Endothelial cell of umbilical vein (primary cell): ENCODE measurements at regions of chr6 and their contacts with region 1.

Region 1: DNA sequence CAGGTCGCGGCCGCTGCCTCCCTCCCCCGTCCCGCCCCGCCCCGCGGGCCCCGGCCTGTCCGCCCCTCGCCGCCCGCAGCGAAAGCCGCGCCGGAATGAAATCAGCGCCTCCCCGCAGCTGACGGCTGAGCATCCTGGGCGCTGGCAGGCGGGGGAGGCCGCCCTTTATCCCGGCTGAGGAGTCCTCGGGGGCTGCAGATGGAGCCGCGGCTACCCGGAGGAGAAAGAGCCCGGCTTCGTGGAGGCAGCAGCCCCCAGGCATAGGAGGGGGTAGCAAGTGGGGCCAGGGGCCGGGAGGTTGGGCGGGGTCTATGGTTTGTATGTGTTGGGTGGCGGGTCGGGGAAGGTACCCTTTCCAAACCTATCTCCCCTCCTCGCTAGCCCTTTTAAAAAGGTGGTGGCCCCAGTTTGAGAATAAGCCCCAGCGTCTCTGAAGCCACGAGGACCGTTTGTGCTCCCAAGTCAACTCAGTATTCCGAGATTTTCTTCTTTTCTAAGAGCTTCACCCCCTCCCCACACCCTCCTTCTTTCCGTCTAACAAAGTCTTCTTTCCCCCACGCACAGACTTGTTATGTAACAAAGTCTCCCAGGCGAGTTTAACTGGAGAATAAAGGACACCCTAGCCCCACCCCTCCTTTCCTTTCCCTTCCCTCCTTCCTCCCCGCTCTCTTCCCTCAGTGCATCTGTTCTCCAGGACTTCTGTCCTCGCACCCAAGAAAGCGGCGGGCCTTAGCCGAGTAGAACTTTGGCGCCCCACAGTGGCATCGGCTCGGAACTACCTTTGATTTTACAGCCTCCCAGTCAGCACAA is 11.0 kb downstream of the POU3F2 start:
- DNase-seq: peak; percentile 80
- H3K4me3 ChIP-seq: no peak overlapping the region
- H3K27ac ChIP-seq: no peak overlapping the region
- H3K4me1 ChIP-seq: peaks cover 2% of the 10 kb centered on the region
- H3K27me3 ChIP-seq: peaks cover 85 to 98% of the 10 kb centered on the region in 2 experiments
- CTCF ChIP-seq: peak; percentile 81 to 87
- POLR2A ChIP-seq: no peak

Region 2: GRCh38 chr6:97186416-97186999 is 1658.9 kb before region 1 on chr6:
- CTCF ChIA-PET with region 1: no interaction called
- POLR2A ChIA-PET with region 1: no interaction called
- dilution Hi-C with region 1: no loop called
- intact Hi-C with region 1: loop called (anchors 2 kb)
- DNase-seq: peak; percentile 77
- H3K4me3 ChIP-seq: no peak overlapping the region
- H3K27ac ChIP-seq: no peak overlapping the region
- H3K4me1 ChIP-seq: peaks cover 32% of the 10 kb centered on the region
- H3K27me3 ChIP-seq: no peaks in the 10 kb centered on the region
- CTCF ChIP-seq: peak; percentile 77 to 85
- POLR2A ChIP-seq: no peak

Region 3: GRCh38 chr6:97437087-97437486 is 1408.3 kb before region 1 on chr6:
- CTCF ChIA-PET with region 1: interaction called, 12 read pairs
- POLR2A ChIA-PET with region 1: no interaction called
- dilution Hi-C with region 1: no loop called
- intact Hi-C with region 1: loop called (anchors 1 kb)
- DNase-seq: peak; percentile 34
- H3K4me3 ChIP-seq: no peak overlapping the region
- H3K27ac ChIP-seq: no peak overlapping the region
- H3K4me1 ChIP-seq: no peaks in the 10 kb centered on the region
- H3K27me3 ChIP-seq: peaks cover 4 to 16% of the 10 kb centered on the region in 2 experiments
- CTCF ChIP-seq: peak; percentile 64 to 69
- POLR2A ChIP-seq: no peak

Region 4: DNA sequence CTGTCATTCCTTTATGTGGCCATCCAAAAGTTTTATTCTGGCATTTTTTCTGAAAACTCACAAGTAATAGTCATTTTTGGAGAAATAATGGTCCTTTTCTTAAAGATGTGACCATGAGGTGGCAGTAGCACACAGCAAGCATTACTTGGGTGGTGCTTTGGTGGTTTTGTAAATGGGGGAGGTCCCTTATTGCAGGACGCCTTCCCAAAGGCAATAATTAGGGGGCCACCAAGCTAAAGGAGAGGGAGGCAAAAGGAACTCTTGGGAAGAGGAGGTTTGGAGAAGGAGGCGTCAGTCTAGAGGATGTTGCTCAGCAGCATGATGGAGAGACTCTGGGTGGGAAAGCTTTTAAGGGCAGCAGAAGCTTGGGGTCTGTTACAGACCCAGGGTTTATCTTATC is 1139.8 kb before region 1 on chr6:
- CTCF ChIA-PET with region 1: no interaction called
- POLR2A ChIA-PET with region 1: no interaction called
- dilution Hi-C with region 1: no loop called
- intact Hi-C with region 1: loop called (anchors 10 kb)
- DNase-seq: no peak
- H3K4me3 ChIP-seq: no peak overlapping the region
- H3K27ac ChIP-seq: no peak overlapping the region
- H3K4me1 ChIP-seq: no peaks in the 10 kb centered on the region
- H3K27me3 ChIP-seq: no peaks in the 10 kb centered on the region
- CTCF ChIP-seq: no peak
- POLR2A ChIP-seq: no peak

Region 5: DNA sequence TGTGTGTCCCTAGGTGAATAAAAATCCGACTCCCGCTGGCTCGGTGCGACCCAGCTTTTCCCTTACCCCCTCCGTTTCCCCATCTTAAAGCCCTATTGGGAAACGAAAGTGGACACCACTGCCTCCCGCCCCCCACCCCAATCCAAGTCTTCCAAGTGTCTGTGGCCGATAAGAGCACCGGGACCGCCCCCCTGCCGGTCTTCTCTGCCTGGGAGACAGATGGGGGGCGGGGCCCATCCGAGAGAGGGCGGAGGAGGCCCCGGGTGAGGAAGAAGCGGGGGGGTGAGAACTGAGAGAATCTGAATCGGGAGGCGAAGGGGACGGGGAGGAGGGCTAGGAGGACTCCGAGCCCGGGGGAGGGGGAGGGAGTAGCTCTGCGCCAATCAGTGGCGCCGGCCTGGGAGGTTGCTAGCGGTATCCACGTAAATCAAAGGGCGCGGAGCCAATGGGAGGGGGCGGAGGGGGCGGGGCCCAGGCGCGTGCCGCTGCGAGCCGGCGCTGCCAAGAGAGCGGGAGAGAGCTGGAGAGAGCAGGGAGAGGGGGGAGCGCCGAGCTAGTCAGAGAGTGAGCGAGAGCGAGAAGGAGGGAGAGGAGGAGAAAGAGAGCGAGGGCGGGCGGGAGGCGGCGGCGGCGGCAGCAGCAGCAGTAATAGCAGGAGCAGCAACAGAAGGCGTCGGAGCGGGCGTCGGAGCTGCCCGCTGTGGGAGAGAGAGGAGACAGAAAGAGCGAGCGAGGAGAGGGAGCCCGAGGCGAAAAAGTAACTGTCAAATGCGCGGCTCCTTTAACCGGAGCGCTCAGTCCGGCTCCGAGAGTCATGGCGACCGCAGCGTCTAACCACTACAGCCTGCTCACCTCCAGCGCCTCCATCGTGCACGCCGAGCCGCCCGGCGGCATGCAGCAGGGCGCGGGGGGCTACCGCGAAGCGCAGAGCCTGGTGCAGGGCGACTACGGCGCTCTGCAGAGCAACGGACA is 11.1 kb before region 1 on chr6 and contains the start of gene POU3F2:
- CTCF ChIA-PET with region 1: interaction called, 5 read pairs
- POLR2A ChIA-PET with region 1: no interaction called
- dilution Hi-C with region 1: no loop called
- intact Hi-C with region 1: loop called (anchors 1 kb)
- DNase-seq: peak; percentile 90
- H3K4me3 ChIP-seq: peak within 1 kb of the TSS; percentile 8 to 40 (median 34)
- H3K27ac ChIP-seq: no peak within 1 kb of the TSS
- H3K4me1 ChIP-seq: peaks cover 9% of the 10 kb centered on the region
- H3K27me3 ChIP-seq: peaks cover 74 to 94% of the 10 kb centered on the region in 2 experiments
- CTCF ChIP-seq: no peak
- POLR2A ChIP-seq: no peak
- total RNA-seq, gene POU3F2: not detected in 2 replicates

Region 6: DNA sequence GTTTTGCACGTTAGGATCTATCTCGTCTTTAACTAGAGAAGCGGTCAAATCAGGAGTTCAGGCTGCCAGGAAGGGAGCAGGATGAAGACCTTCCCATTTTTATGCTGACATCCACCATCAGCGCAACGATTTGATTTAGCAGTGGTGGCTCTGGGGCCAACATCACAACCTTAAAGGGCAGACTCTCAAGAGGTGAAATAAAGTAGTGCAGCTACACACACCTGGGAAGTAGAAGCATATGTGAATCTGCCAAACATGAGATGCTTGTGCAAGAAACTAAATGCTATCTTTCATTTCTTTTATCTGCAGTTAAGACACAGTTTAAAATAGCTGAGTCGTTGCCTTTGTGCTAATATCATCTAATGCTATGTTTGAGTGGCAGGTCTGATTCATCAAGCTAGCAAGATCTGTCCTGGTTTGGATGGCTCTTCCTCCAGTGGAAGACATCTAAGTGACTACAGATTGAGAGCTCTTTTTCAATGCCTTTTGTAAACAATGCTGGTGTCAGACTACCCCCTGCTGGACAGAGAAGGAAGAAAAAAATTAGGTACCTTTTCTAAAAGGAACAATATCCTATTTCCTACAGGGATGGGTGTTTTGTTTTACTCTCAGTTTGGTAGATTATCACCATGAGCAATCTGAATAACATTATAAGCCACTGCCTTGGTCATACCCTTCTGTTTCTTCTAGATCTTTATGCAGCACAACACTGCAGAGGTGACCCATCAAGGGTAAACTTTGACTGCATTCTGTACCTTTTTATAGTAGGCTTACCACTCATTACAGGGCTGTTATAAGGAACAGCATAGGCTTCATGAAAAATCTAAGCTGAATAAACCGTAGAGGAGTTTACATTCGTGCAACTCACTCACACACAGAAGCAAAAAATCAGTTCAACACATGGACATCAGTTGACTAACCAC is 274.0 kb after region 1 on chr6:
- CTCF ChIA-PET with region 1: interaction called, 11 read pairs
- POLR2A ChIA-PET with region 1: no interaction called
- dilution Hi-C with region 1: no loop called
- intact Hi-C with region 1: loop called (anchors 2 kb)
- DNase-seq: peak; percentile 54
- H3K4me3 ChIP-seq: no peak overlapping the region
- H3K27ac ChIP-seq: no peak overlapping the region
- H3K4me1 ChIP-seq: no peaks in the 10 kb centered on the region
- H3K27me3 ChIP-seq: peaks cover 0 to 2% of the 10 kb centered on the region in 2 experiments
- CTCF ChIP-seq: peak; percentile 44 to 49
- POLR2A ChIP-seq: no peak